ENCODE measurements at regions of chr4 and their contacts with region 1.

Region 1: DNA sequence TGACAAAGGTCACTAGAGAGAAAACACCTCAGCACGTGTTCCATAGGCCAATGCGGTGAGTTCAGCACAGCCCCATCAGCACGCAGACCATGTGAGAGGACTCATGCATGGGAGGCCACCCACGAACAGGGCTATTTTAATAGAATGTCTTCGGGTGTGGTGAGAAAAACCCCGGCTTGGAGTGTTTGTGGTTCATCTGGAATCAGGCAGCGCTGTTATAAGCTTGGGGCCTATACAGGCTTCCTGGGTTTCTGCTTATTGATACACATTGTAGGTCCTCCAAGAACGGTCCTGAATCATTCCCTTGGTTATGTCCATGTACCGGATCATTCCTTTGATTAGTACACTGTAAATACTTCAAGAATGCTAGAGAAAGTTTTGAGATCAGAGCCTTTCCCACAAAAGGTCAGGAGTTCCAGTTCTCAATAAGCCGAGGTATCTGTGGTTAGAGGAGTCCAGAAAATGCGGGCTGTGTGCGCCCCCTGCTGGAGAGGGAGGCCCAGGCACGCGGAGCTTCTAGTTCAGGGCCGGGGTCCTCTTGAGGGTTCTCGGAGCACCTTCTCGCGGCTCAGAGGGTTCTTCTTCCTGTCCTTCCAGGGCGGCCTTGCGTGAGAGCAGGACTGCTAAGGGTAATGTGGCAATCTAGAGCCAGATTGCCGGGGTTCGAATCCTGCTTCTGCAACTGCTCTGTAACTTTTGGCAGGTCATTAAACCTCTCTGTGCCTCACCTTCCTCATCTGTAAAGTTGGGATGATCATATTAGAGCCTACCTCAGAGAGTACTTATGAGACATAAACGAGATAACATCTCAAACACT is 51.8 kb downstream of the TLR10 start:
- DNase-seq: peak; percentile 38
- H3K4me3 ChIP-seq: no peak overlapping the region
- H3K27me3 ChIP-seq: peaks cover 3% of the 10 kb centered on the region; the same call in 1 of the 2 replicates
- CTCF ChIP-seq: peak; percentile 95

Region 2: GRCh38 chr4:38069271-38069760 is 661.7 kb before region 1 on chr4:
- CTCF ChIA-PET with region 1: interaction called, 11 read pairs
- POLR2A ChIA-PET with region 1: no interaction called
- DNase-seq: no peak
- H3K4me3 ChIP-seq: no peak overlapping the region
- H3K27me3 ChIP-seq: no peaks in the 10 kb centered on the region
- CTCF ChIP-seq: peak; percentile 31; the same call in 1 of the 2 replicates

Region 3: GRCh38 chr4:38174801-38175200 is 556.2 kb before region 1 on chr4:
- CTCF ChIA-PET with region 1: interaction called, 60 read pairs
- POLR2A ChIA-PET with region 1: no interaction called
- DNase-seq: no peak
- H3K4me3 ChIP-seq: no peak overlapping the region
- H3K27me3 ChIP-seq: no peaks in the 10 kb centered on the region
- CTCF ChIP-seq: no peak

Region 4: DNA sequence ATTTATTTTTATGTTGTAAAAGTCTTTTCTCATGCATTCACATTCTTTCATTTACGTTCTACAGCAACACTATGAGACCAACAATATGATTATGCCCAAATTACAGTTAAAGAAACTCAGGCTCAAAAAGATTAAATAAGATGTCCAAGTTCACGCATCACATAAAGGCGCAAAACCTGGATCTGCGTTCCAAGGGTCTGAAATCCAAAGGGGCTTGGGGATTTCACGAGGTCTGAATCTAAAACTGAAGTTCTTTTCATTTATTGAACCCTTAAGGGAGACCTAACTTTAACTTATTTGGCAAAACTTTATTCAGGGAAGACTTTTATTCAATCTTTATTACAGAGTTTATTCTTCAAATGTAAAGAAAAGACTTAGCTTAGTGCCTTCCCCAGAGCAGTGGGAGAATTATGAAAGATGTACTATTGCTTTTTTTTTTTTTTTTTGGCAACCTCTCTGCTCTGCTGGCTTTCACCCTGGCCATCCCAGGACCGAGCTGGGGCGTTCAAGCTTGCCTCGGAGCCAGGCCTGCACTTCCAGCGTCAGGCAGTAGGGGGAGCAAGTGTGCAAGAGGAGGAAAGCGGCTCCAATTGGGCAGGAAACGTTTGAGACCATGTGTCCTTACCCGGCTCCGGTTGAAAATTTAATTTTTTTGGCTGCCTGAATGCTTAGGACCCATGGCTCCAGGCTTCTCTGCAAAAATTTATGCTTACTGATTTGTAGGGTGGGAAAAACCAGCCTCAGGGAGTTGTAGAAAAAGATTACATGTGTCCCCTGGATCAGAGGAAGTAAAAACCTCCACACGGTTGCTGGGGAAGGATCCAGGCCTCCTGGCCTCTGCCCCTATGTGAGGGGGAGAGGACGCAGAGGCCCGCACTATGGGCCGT is 411.3 kb before region 1 on chr4:
- CTCF ChIA-PET with region 1: interaction called, 15 read pairs
- POLR2A ChIA-PET with region 1: no interaction called
- DNase-seq: peak; percentile 42
- H3K4me3 ChIP-seq: no peak overlapping the region
- H3K27me3 ChIP-seq: no peaks in the 10 kb centered on the region
- CTCF ChIP-seq: peak; percentile 100

Region 5: GRCh38 chr4:38675146-38676121 is 55.6 kb before region 1 on chr4:
- CTCF ChIA-PET with region 1: interaction called, 12 read pairs
- POLR2A ChIA-PET with region 1: no interaction called
- DNase-seq: peak; percentile 22
- H3K4me3 ChIP-seq: no peak overlapping the region
- H3K27me3 ChIP-seq: no peaks in the 10 kb centered on the region
- CTCF ChIP-seq: peak; percentile 88

Region 6: DNA sequence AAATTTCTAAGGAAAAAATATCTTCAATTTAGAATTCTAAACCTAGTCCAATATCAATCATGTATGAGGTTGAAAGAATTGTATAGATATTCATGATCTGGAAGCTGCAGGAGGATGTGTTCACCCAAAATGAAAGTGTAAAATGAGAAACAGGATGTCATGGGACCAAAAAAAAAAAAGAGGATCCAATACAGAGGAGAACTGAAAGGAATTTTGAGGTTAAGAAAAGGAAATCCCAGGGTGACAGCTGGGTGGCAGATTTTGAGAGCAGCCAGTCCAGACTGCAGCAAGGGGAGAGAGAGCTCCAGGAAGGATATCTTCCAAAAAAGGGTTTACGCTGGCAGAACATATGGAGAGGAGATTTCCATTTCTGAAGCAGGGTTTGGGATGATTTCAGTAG is 12.8 kb after region 1 on chr4:
- CTCF ChIA-PET with region 1: interaction called, 40 read pairs
- POLR2A ChIA-PET with region 1: no interaction called
- DNase-seq: no peak
- H3K4me3 ChIP-seq: no peak overlapping the region
- H3K27me3 ChIP-seq: no peaks in the 10 kb centered on the region; the same call in 1 of the 2 replicates
- CTCF ChIP-seq: no peak

Measured in BJ (cell line).